KBM-7 (cell line): ENCODE measurements at regions of chr4 and their contacts with region 1.

Region 1: GRCh38 chr4:122922877-122923511 is 597 bp upstream of the NUDT6 start:
- DNase-seq: peak; percentile 94

Region 2: GRCh38 chr4:122602277-122603142 is 320.5 kb before region 1 on chr4:
- in situ Hi-C with region 1: loop called (anchors 25 kb)
- DNase-seq: peak; percentile 33

Region 3: GRCh38 chr4:122758033-122758432 is 165.0 kb before region 1 on chr4:
- in situ Hi-C with region 1: loop called (anchors 25 kb)
- DNase-seq: peak; percentile 66